Right ventricle myocardium inferior (tissue), 1 donor: ENCODE measurements at regions of chr20 and their contacts with region 1.

Region 1: DNA sequence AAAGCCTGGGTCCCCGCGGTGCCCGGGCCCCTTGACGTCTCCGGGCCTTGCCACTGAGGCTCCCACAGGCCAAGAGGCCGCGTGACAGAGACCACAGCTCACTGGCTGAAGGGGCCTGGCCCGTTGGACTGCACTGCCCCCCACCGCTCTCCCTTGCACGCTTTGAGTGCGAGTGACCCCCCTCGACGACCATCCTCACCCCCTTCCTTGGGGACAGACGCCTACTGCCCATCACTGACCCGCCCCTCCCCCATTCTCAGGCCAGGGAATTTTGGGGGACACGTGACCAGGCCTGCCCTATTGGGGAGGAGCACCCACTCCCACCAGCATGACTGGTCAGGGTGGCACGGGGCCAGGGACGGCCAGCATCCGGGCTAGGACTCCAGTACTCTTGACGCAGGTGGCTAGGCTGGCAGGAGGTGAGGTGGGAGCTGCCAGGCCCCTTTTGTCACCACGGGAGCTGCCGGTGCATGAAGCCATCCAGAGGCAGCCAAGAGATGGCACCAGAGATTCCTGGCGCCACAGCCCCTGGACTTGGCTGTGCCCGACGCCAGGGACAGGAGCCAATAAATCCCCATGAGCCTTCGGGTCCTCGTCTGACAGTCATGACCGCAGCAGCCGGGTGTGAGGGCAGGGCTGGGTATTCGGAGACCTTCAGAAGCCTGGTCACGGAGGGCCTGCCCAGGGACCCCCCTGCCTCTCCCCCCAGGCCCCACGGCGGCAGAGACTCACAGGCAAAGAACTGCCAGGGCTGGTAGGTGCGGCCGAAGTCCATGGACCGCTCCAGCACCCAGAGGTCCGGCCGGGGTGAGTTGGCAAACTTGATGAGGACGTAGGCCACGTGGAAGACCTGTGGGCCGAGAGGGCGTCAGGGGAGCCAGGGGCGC is 14.5 kb downstream of the LAMA5 start:
- DNase-seq: peak; percentile 85
- ATAC-seq: peak; percentile 70

Region 2: GRCh38 chr20:62010551-62011402 is 341.9 kb before region 1 on chr20:
- intact Hi-C with region 1: no loop called
- DNase-seq: no peak
- ATAC-seq: peak; percentile 72

Region 3: DNA sequence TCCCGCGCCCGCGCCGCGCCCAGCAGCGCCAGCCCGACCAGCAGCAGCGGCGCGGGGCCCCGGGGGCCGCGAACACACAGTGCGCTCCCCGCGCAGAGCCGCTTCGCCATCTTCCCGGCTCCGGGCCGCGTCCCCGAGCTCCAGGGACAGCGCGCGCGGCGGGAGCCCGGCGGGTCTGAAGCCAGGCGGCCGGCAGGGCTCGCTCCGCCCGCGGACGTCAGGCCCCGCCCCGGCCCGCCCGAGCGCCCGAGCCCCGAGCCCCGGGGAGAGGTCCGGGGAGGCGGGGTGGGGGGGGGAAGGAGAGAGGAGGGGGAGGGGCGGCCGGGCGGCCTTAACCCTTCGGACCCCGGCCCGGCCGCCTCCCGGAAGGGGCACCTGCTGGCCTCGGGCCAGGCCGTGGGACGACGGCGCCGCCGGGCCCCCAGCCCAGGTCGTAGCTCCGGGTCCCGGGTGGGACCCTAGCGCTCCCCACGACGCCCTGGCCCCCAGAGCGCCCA is 14.5 kb after region 1 on chr20 and contains the start of gene LAMA5:
- intact Hi-C with region 1: loop called (anchors 2 kb)
- DNase-seq: peak; percentile 76
- ATAC-seq: peak; percentile 52
- total RNA-seq, gene LAMA5: 89.3 TPM

Region 4: GRCh38 chr20:62376112-62377063 is 23.7 kb after region 1 on chr20:
- intact Hi-C with region 1: loop called (anchors 2 kb)
- DNase-seq: no peak
- ATAC-seq: peak; percentile 80